ENCODE measurements at regions of chr1 and their contacts with region 1.

Region 1: GRCh38 chr1:207797229-207797961 is 45.5 kb downstream of the CD46 start:
- DNase-seq: peak; percentile 76 to 79
- H3K4me3 ChIP-seq: no peak overlapping the region
- H3K27ac ChIP-seq: peak overlapping the region; percentile 32; the same call in 1 of the 2 replicates
- H3K4me1 ChIP-seq: no peaks in the 10 kb centered on the region
- H3K27me3 ChIP-seq: no peaks in the 10 kb centered on the region
- CTCF ChIP-seq: peak; percentile 87

Region 2: GRCh38 chr1:207698822-207699483 is 98.4 kb before region 1 on chr1:
- CTCF ChIA-PET with region 1: interaction called, 6 read pairs
- POLR2A ChIA-PET with region 1: interaction called, 5 read pairs
- intact Hi-C with region 1: loop called (anchors 2 kb)
- DNase-seq: peak; percentile 56 to 65
- H3K4me3 ChIP-seq: no peak overlapping the region
- H3K27ac ChIP-seq: no peak overlapping the region
- H3K4me1 ChIP-seq: no peaks in the 10 kb centered on the region
- H3K27me3 ChIP-seq: no peaks in the 10 kb centered on the region
- CTCF ChIP-seq: peak; percentile 78

Region 3: GRCh38 chr1:207815913-207816291 is 18.5 kb after region 1 on chr1:
- CTCF ChIA-PET with region 1: no interaction called
- POLR2A ChIA-PET with region 1: no interaction called
- intact Hi-C with region 1: no loop called
- DNase-seq: no peak
- H3K4me3 ChIP-seq: no peak overlapping the region
- H3K27ac ChIP-seq: no peak overlapping the region
- H3K4me1 ChIP-seq: no peaks in the 10 kb centered on the region
- H3K27me3 ChIP-seq: no peaks in the 10 kb centered on the region
- CTCF ChIP-seq: no peak

Region 4: GRCh38 chr1:207944571-207944970 is 147.2 kb after region 1 on chr1:
- CTCF ChIA-PET with region 1: no interaction called
- POLR2A ChIA-PET with region 1: no interaction called
- intact Hi-C with region 1: no loop called
- DNase-seq: peak in 1 of 2 experiments; percentile 46
- H3K4me3 ChIP-seq: no peak overlapping the region
- H3K27ac ChIP-seq: no peak overlapping the region
- H3K4me1 ChIP-seq: no peaks in the 10 kb centered on the region
- H3K27me3 ChIP-seq: peaks cover 11% of the 10 kb centered on the region; the same call in 1 of the 2 replicates
- CTCF ChIP-seq: no peak

Measured in PC-9 (cell line).